Calu3 (cell line): ENCODE measurements at regions of chr1 and their contacts with region 1.

Region 1: GRCh38 chr1:181166377-181167196 is 78.1 kb downstream of the IER5 start:
- DNase-seq: peak; percentile 83
- H3K4me3 Mint-ChIP-seq: no peak overlapping the region
- H3K27ac Mint-ChIP-seq: no peak overlapping the region
- H3K4me1 Mint-ChIP-seq: no peaks in the 10 kb centered on the region
- H3K27me3 Mint-ChIP-seq: peaks cover 34% of the 10 kb centered on the region
- CTCF ChIP-seq: peak; percentile 91

Region 2: GRCh38 chr1:180515864-180516388 is 650.7 kb before region 1 on chr1:
- CTCF ChIA-PET with region 1: no interaction called
- intact Hi-C with region 1: loop called (anchors 5 kb)
- DNase-seq: peak; percentile 75
- H3K4me3 Mint-ChIP-seq: no peak overlapping the region
- H3K27ac Mint-ChIP-seq: no peak overlapping the region
- H3K4me1 Mint-ChIP-seq: peaks cover 13% of the 10 kb centered on the region
- H3K27me3 Mint-ChIP-seq: no peaks in the 10 kb centered on the region
- CTCF ChIP-seq: peak; percentile 94

Region 3: DNA sequence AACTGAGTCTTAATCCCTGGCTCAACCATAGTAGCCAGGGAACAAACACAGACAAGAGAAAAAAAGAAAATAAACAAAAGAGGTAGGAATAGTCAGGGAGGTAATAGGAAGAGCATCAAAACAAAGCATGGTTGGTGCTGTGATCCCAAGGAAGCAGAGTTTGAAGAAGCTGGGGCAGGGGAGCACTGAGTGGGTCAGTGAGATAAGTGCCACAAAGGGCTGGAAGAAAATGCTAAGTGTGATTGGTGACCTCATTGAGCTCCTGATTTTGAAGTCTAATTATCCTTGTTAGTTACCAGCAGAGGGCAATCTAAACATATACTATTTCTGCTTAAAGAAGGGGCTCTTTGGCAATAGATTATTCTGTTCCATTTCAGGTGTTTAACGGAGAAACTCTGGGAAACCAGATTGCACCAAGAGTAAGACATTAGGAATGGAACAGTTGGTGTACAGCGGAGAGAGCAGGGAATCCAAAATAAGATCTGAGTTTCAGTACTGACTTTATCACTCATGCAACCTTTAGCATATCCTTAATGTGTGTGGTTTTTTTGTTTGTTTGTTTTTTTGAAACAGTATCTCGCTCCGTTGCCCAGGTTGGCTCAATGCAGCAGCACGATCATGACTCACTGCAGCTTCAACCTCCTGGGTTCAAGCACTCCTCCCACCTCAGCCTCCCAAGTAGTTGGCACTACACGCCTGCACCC is 284.6 kb before region 1 on chr1:
- CTCF ChIA-PET with region 1: interaction called, 18 read pairs
- intact Hi-C with region 1: loop called (anchors 1 kb)
- DNase-seq: no peak
- H3K4me3 Mint-ChIP-seq: no peak overlapping the region
- H3K27ac Mint-ChIP-seq: no peak overlapping the region
- H3K4me1 Mint-ChIP-seq: no peaks in the 10 kb centered on the region
- H3K27me3 Mint-ChIP-seq: no peaks in the 10 kb centered on the region
- CTCF ChIP-seq: no peak

Region 4: GRCh38 chr1:180954005-180954800 is 212.4 kb before region 1 on chr1:
- CTCF ChIA-PET with region 1: no interaction called
- intact Hi-C with region 1: loop called (anchors 5 kb)
- DNase-seq: peak; percentile 70
- H3K4me3 Mint-ChIP-seq: peak overlapping the region; percentile 66
- H3K27ac Mint-ChIP-seq: no peak overlapping the region
- H3K4me1 Mint-ChIP-seq: peaks cover 8% of the 10 kb centered on the region
- H3K27me3 Mint-ChIP-seq: no peaks in the 10 kb centered on the region
- CTCF ChIP-seq: no peak

Region 5: DNA sequence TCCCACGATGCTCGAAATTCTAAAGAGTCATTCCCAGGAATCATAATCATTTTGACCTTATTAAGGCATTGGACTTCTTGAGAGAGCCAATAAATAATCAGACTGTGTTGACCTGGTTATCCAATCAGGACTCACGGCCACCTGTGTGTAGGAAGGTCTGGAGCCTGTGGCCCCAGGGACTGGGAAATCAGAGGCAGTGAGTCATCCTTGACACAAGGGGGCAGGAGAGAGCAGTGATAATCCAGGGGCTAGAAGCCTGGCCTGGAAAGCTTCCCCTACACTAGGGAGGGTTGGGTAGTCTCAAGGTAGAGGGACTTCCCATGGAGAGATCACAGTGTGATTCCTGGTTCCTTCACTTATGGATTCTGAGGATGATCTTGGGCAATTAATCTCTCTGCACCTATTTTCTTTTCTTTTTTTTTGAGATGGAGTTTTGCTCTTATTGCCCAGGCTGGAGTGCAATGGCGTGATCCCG is 128.2 kb before region 1 on chr1:
- CTCF ChIA-PET with region 1: no interaction called
- intact Hi-C with region 1: loop called (anchors 1 kb)
- DNase-seq: peak; percentile 77
- H3K4me3 Mint-ChIP-seq: no peak overlapping the region
- H3K27ac Mint-ChIP-seq: no peak overlapping the region
- H3K4me1 Mint-ChIP-seq: peaks cover 12% of the 10 kb centered on the region
- H3K27me3 Mint-ChIP-seq: no peaks in the 10 kb centered on the region
- CTCF ChIP-seq: peak; percentile 73

Region 6: GRCh38 chr1:181088079-181089016 is 78.2 kb before region 1 on chr1 and contains the start of gene IER5:
- CTCF ChIA-PET with region 1: interaction called, 4 read pairs
- intact Hi-C with region 1: loop called (anchors 1 kb)
- DNase-seq: peak; percentile 97
- H3K4me3 Mint-ChIP-seq: peak within 1 kb of the TSS; percentile 93
- H3K27ac Mint-ChIP-seq: peak within 1 kb of the TSS; percentile 97
- H3K4me1 Mint-ChIP-seq: peaks cover 26% of the 10 kb centered on the region
- H3K27me3 Mint-ChIP-seq: no peaks in the 10 kb centered on the region
- CTCF ChIP-seq: no peak
- total RNA-seq, gene IER5: 11.4 and 12.2 TPM in 2 replicates

Region 7: GRCh38 chr1:181347495-181348390 is 181.2 kb after region 1 on chr1:
- CTCF ChIA-PET with region 1: no interaction called
- intact Hi-C with region 1: no loop called
- DNase-seq: no peak
- H3K4me3 Mint-ChIP-seq: no peak overlapping the region
- H3K27ac Mint-ChIP-seq: no peak overlapping the region
- H3K4me1 Mint-ChIP-seq: no peaks in the 10 kb centered on the region
- H3K27me3 Mint-ChIP-seq: peaks cover 92% of the 10 kb centered on the region
- CTCF ChIP-seq: no peak